Transverse colon (tissue), 4 donors: ENCODE measurements at regions of chr19 and their contacts with region 1.

Region 1: DNA sequence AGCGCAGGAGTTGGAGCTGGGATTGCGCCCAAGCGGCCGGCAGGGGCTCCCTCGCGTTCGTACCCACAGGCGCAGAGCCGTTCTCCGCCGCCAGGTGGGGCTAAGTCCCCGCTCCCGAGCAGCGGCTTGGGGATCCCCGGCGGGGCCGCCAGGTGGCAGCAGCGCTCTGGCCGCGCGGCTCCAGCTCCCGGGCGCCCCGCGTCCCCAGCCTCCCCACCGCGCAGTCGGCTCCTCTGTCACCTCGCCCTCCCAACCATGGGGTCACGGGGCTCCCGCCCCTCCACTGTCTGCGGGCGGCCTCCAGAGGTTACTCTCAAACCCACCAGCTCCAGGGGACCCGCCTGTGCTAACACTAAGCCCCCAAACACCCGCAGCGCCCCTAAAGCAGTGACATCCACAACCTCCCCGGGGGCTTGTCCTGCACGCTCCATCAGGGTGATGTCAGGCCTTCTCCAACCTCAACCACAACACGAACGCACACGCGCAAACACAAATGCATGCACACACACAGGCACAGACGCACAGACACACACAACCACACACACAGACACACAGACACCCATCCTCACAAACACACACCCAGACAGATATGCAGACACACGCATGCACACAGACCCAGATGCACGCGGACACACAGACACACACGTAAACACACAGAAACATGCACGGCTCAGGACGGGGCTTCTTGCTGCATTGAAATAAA is 18.4 kb upstream of the KCTD15 start:
- DNase-seq: peak; percentile 85
- H3K4me3 ChIP-seq: no peak overlapping the region
- H3K27ac ChIP-seq: no peak overlapping the region
- H3K4me1 ChIP-seq: peaks cover 0 to 4% (median 2%) of the 10 kb centered on the region in 4 donors
- H3K27me3 ChIP-seq: peaks cover 19% of the 10 kb centered on the region
- CTCF ChIP-seq: peak; percentile 100
- EP300 ChIP-seq: no peak
- POLR2A ChIP-seq: no peak

Region 2: DNA sequence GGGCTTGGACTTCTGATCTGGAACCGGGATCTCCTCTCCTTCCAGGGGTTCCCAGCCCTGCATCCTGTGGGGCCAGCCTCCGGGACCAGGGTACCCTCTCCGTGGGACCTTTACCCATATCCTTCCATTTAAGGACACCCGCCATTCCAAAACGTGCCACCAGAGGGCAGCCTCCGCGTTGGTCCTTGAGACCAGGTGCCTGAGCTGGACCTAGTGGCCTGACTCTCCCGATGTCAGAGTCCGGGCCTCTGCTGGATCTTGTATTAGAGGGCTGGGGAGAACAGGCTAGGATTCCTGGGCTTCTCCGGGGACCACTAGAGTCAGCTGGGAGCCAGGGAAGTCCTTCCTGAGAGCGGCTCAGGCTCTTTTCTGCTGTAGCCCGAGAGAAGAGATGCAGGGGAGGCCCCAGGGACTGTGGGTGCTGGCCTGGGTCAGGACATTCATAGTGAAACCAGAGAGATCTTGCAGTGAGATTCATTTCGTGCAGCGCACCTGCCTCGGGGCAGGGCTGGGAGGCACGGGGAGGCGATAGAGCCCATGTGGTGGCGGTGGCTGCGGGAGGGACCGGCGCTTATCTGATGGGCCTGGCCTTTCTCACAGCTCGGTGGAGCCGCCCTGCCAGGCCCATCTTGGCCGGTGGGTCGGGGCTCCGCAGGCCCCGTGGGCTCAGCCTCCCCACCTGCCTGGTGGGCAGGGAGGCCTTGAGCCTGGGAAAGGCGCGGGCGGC is 542.8 kb before region 1 on chr19:
- in situ Hi-C with region 1: loop called in 2 of 4 experiments (anchors 10 to 25 kb)
- intact Hi-C with region 1: loop called (anchors 5 kb)
- DNase-seq: peak; percentile 87
- H3K4me3 ChIP-seq: peak overlapping the region in 1 of 4 donors; percentile 5
- H3K27ac ChIP-seq: no peak overlapping the region
- H3K4me1 ChIP-seq: peaks cover 0 to 7% (median 0%) of the 10 kb centered on the region in 4 donors
- H3K27me3 ChIP-seq: no peaks in the 10 kb centered on the region
- CTCF ChIP-seq: peak; percentile 92 to 95 (median 93)
- EP300 ChIP-seq: no peak
- POLR2A ChIP-seq: no peak

Region 3: DNA sequence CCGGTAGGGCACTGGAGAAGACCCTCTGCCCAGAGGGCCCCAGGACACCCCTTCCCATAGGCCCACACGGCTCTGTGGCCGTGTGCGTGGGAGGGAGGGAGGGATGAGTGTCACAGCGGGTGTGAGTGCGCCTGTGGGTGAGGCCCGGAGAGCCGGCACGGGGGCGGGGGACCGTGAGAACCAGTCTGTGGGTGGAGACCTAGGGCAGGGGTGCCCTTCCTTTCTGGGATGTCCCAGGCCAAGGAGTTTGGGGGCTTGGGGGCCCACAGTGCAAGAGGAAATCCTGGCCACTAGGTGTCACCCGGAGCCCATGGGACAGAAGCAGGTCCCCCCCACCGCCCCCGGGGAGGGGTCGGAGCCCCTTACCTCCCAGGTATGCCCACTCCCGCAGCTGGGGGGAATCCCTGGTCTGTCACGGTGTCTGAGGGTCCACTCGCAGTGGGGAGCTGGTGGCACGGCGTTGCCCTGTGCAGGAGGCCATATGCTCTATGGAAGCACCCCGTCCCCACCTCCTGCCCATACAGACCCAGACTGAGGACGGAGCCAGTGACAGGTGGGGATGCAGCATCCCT is 536.6 kb before region 1 on chr19:
- in situ Hi-C with region 1: loop called in 2 of 4 experiments (anchors 10 to 25 kb)
- intact Hi-C with region 1: loop called (anchors 5 kb)
- DNase-seq: peak; percentile 33
- H3K4me3 ChIP-seq: no peak overlapping the region
- H3K27ac ChIP-seq: no peak overlapping the region
- H3K4me1 ChIP-seq: peaks cover 2 to 11% (median 8%) of the 10 kb centered on the region in 4 donors
- H3K27me3 ChIP-seq: no peaks in the 10 kb centered on the region
- CTCF ChIP-seq: peak; percentile 69 to 85 (median 71)
- EP300 ChIP-seq: no peak
- POLR2A ChIP-seq: no peak

Region 4: GRCh38 chr19:33430674-33431277 is 347.5 kb before region 1 on chr19:
- in situ Hi-C with region 1: loop called (anchors 5 to 25 kb)
- intact Hi-C with region 1: no loop called
- DNase-seq: peak; percentile 67
- H3K4me3 ChIP-seq: no peak overlapping the region
- H3K27ac ChIP-seq: no peak overlapping the region
- H3K4me1 ChIP-seq: no peaks in the 10 kb centered on the region
- H3K27me3 ChIP-seq: no peaks in the 10 kb centered on the region
- CTCF ChIP-seq: peak; percentile 62 to 77 (median 74)
- EP300 ChIP-seq: no peak
- POLR2A ChIP-seq: no peak

Region 5: DNA sequence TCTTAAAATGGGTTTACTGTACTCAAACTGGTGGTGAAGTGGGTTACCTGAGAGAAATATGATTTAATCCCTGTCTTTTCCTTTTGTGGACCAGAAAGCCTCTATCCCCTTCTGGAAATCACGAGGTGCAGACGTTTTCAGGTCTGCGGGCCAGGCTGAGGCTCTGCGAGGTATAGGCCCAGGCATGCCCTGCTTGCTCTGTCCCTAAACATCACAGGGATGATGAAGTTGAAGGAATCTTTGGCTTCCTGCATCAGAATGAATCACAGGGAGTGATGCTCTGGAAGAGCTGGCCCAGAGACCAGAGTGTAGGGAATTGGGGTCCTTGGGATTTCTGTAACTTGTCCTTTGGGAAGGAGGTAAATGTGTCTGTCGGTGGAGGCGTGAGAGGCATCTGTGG is 174.9 kb before region 1 on chr19:
- in situ Hi-C with region 1: no loop called
- intact Hi-C with region 1: no loop called
- DNase-seq: no peak
- H3K4me3 ChIP-seq: no peak overlapping the region
- H3K27ac ChIP-seq: no peak overlapping the region
- H3K4me1 ChIP-seq: no peaks in the 10 kb centered on the region
- H3K27me3 ChIP-seq: no peaks in the 10 kb centered on the region
- CTCF ChIP-seq: no peak
- EP300 ChIP-seq: no peak
- POLR2A ChIP-seq: no peak

Region 6: DNA sequence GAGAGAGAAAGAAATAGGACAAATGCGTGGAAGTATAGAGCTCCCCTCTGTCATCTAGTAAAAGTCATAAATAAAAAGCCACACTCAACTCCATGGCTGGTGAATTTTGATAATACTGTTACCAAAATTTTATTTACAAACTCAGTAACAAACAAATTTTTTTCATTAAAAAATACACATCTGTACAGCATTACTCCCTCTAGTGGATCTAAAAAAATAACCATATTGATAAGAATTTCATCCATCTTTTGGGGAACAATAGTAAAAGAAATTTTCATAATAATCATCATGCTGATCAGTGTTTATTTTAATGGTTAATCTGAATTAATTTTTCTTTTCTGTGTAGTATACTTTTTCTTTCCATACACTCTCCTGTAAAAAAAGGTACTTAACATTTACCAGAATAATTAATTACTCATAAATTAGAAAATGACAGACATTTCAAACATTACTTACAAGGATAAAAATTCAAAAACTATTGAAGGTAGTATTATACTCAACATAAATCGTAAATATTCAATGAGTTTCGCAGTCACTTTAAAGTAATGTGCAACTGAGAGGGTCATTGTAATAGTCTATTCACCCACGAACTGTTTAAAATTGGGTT is 220.6 kb after region 1 on chr19:
- in situ Hi-C with region 1: loop called in 2 of 4 experiments (anchors 10 kb)
- intact Hi-C with region 1: no loop called
- DNase-seq: no peak
- H3K4me3 ChIP-seq: no peak overlapping the region
- H3K27ac ChIP-seq: no peak overlapping the region
- H3K4me1 ChIP-seq: no peaks in the 10 kb centered on the region
- H3K27me3 ChIP-seq: peaks cover 9% of the 10 kb centered on the region
- CTCF ChIP-seq: peak; percentile 34 to 49 (median 45)
- EP300 ChIP-seq: no peak
- POLR2A ChIP-seq: no peak

Region 7: GRCh38 chr19:34096020-34096915 is 318.0 kb after region 1 on chr19:
- in situ Hi-C with region 1: loop called (anchors 10 kb)
- intact Hi-C with region 1: loop called (anchors 2 kb)
- DNase-seq: no peak
- H3K4me3 ChIP-seq: no peak overlapping the region
- H3K27ac ChIP-seq: no peak overlapping the region
- H3K4me1 ChIP-seq: no peaks in the 10 kb centered on the region
- H3K27me3 ChIP-seq: peaks cover 12% of the 10 kb centered on the region
- CTCF ChIP-seq: peak; percentile 58 to 68 (median 63)
- EP300 ChIP-seq: no peak
- POLR2A ChIP-seq: no peak

Region 8: DNA sequence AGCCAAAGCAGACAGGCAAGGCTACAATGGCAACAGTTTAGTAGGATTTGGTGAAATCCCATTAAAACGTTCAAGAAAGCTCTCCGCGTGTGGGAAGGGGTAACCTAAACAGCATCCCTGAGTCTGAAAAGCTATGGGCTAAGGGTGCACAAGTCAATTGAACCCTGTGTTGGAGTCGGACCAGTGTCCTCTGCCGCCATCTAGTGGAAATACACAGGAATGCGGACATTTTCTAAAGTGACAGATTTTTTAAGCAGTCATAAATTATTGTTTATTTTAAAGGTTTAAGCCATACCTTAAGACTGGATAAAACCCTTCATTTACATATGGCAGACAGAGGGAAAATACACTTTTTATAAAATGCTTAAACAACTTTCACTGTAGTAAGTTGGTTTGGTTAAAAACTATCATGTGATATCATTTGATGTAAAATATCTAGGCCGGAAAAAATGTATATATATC is 367.5 kb after region 1 on chr19:
- in situ Hi-C with region 1: no loop called
- intact Hi-C with region 1: loop called (anchors 5 kb)
- DNase-seq: peak; percentile 38
- H3K4me3 ChIP-seq: no peak overlapping the region
- H3K27ac ChIP-seq: no peak overlapping the region
- H3K4me1 ChIP-seq: no peaks in the 10 kb centered on the region
- H3K27me3 ChIP-seq: no peaks in the 10 kb centered on the region
- CTCF ChIP-seq: peak; percentile 71 to 85 (median 76)
- EP300 ChIP-seq: no peak
- POLR2A ChIP-seq: no peak